ENCODE measurements at regions of chr2 and their contacts with region 1.

Region 1: GRCh38 chr2:16617282-16618261 is 48.1 kb downstream of the CYRIA start:
- DNase-seq: no peak
- ATAC-seq: no peak
- H3K4me3 ChIP-seq: no peak overlapping the region
- H3K27ac ChIP-seq: no peak overlapping the region
- H3K4me1 ChIP-seq: no peaks in the 10 kb centered on the region
- H3K27me3 ChIP-seq: peaks cover 0 to 3% of the 10 kb centered on the region in 2 experiments; a peak in 2 of 4 replicates
- CTCF ChIP-seq: peak in 2 of 3 experiments; percentile 22 to 24; a peak in 3 of 6 replicates
- EP300 ChIP-seq: no peak
- POLR2A ChIP-seq: no peak
- RAD21 ChIP-seq: peak; percentile 48

Region 2: DNA sequence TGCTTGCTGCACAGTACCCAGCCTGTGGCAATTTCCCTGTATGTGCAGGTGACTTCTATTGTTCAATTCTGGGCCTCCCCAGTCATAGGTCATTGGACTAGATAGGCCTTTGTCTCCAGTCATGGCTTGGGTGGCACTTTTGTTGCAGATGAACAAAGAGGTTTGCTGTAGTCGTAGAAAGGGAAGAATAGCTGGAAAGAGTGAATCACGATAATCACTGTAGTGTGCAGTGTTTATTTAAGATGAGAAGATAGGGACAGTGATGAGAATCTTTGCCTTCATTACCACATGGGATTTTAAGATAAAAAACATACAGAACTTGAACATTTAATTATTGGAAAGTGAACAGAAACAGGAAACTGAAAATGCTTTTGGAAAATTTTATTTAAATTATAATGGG is 204.1 kb after region 1 on chr2:
- CTCF ChIA-PET with region 1: no interaction called
- POLR2A ChIA-PET with region 1: interaction called, 10 read pairs
- RAD21 ChIA-PET with region 1: no interaction called
- SMC1A ChIA-PET with region 1: no interaction called
- in situ Hi-C with region 1: no loop called
- intact Hi-C with region 1: no loop called
- DNase-seq: no peak
- ATAC-seq: no peak
- H3K4me3 ChIP-seq: no peak overlapping the region
- H3K27ac ChIP-seq: no peak overlapping the region
- H3K4me1 ChIP-seq: no peaks in the 10 kb centered on the region
- H3K27me3 ChIP-seq: no peaks in the 10 kb centered on the region
- CTCF ChIP-seq: no peak
- EP300 ChIP-seq: no peak
- POLR2A ChIP-seq: no peak
- RAD21 ChIP-seq: no peak